ENCODE measurements at regions of chr9 and their contacts with region 1.

Region 1: GRCh38 chr9:26975693-26976059 is 19.5 kb downstream of the IFT74 start:
- DNase-seq: peak; percentile 25 to 52 (median 43)
- H3K4me3 ChIP-seq: no peak overlapping the region
- H3K4me3 Mint-ChIP-seq: no peak overlapping the region
- H3K27ac ChIP-seq: no peak overlapping the region
- H3K27ac Mint-ChIP-seq: no peak overlapping the region
- H3K4me1 ChIP-seq: no peaks in the 10 kb centered on the region
- H3K4me1 Mint-ChIP-seq: no peaks in the 10 kb centered on the region
- H3K27me3 ChIP-seq: no peaks in the 10 kb centered on the region
- H3K27me3 Mint-ChIP-seq: no peaks in the 10 kb centered on the region
- CTCF ChIP-seq: peak; percentile 76

Region 2: DNA sequence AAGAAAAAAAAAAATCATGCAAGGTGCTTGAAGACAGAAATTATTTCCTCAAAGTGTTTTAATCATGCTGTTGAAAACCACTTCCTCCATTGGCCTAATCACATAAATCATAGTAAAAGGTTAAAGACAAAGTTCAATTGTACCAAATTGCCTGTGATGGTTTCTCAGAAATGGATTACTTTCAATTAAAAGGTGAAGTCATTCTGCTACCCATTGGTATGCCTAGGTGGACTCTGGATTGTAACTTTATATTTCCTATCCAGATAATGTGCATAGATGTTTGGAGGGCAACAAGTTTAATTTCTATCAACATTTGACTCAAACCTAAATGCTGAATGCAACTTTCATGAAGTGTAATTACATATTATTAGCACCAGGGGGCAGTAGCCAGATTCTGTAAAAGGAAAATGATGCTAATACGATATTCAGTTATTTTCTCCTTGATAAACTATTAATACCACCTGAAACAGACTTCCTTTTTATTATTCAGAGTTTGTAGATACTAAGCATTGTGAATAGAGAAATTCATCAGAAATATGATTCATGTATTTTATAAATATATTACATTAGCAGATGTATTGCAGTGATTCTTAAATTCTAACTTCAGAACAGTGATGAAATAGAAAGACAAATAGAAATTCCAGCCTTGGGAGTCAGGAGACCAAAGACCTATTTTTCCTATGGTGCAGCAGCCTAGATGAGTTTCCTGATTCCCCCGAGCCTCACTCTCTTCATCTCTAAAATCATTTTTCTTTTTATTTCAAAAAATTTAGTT is 231.3 kb before region 1 on chr9:
- intact Hi-C with region 1: loop called (anchors 10 kb)
- DNase-seq: peak in 2 of 3 donors; percentile 11 to 24
- H3K4me3 ChIP-seq: no peak overlapping the region
- H3K4me3 Mint-ChIP-seq: no peak overlapping the region
- H3K27ac ChIP-seq: no peak overlapping the region
- H3K27ac Mint-ChIP-seq: no peak overlapping the region
- H3K4me1 ChIP-seq: no peaks in the 10 kb centered on the region
- H3K4me1 Mint-ChIP-seq: no peaks in the 10 kb centered on the region
- H3K27me3 ChIP-seq: no peaks in the 10 kb centered on the region
- H3K27me3 Mint-ChIP-seq: peaks cover 0 to 3% (median 3%) of the 10 kb centered on the region in 3 donors
- CTCF ChIP-seq: peak; percentile 84

Measured in CD14-positive monocyte (primary cell).